ENCODE measurements at regions of chr4 and their contacts with region 1.

Region 1: GRCh38 chr4:85747882-85748491 is 273.0 kb downstream of the ARHGAP24 start:
- DNase-seq: peak; percentile 28
- H3K4me3 Mint-ChIP-seq: no peak overlapping the region
- H3K27ac Mint-ChIP-seq: no peak overlapping the region
- H3K4me1 Mint-ChIP-seq: no peaks in the 10 kb centered on the region
- H3K27me3 Mint-ChIP-seq: no peaks in the 10 kb centered on the region
- CTCF ChIP-seq: peak; percentile 38

Region 2: DNA sequence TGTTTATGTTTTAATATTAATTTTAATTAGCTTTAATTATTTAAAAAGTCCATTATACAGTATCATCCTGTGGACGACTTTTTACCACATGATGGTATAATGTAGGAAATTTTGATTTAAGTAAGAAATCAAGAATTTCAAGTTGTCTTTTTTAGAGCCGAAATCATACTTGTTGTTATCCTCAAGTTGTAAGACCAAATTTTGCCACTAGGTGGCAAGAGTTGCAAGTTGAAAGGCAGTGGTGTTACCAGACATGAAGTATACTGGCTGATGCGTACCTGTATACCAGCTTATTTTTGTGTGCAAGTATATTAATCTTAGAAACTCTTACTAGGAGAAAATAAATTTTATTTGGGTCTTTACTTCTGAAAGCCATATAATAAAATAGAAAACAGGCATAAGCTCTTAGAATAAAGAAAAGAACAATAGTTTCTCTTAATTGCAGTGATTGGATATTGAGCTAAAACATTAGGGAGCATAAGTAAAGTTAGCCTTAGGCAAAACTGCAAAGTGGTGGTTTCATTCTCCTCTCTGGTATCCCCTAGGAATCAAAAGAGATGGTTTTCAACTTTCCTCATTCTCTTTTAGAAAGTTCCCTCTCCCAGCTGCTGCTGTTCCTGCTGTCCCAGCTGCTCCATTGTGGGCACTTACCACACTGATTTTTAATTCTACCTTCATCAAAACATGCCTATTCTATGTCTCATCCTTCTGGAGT is 663.5 kb before region 1 on chr4:
- CTCF ChIA-PET with region 1: interaction called, 3 read pairs
- intact Hi-C with region 1: loop called (anchors 5 kb)
- DNase-seq: peak; percentile 54
- H3K4me3 Mint-ChIP-seq: no peak overlapping the region
- H3K27ac Mint-ChIP-seq: no peak overlapping the region
- H3K4me1 Mint-ChIP-seq: no peaks in the 10 kb centered on the region
- H3K27me3 Mint-ChIP-seq: no peaks in the 10 kb centered on the region
- CTCF ChIP-seq: peak; percentile 46

Region 3: GRCh38 chr4:85419103-85419502 is 328.9 kb before region 1 on chr4:
- CTCF ChIA-PET with region 1: interaction called, 5 read pairs
- intact Hi-C with region 1: loop called (anchors 5 kb)
- DNase-seq: no peak
- H3K4me3 Mint-ChIP-seq: no peak overlapping the region
- H3K27ac Mint-ChIP-seq: no peak overlapping the region
- H3K4me1 Mint-ChIP-seq: no peaks in the 10 kb centered on the region
- H3K27me3 Mint-ChIP-seq: no peaks in the 10 kb centered on the region
- CTCF ChIP-seq: no peak

Measured in Calu3 (cell line).